ENCODE measurements at regions of chr2 and their contacts with region 1.

Region 1: GRCh38 chr2:127570282-127571250 is 35.1 kb downstream of the MYO7B start:
- DNase-seq: no peak
- ATAC-seq: no peak
- H3K4me3 Mint-ChIP-seq: no peak overlapping the region
- H3K27ac Mint-ChIP-seq: no peak overlapping the region
- H3K4me1 Mint-ChIP-seq: peaks cover 6% of the 10 kb centered on the region
- H3K27me3 Mint-ChIP-seq: peaks cover 2% of the 10 kb centered on the region

Region 2: GRCh38 chr2:126850940-126851339 is 719.6 kb before region 1 on chr2:
- CTCF ChIA-PET with region 1: no interaction called
- POLR2A ChIA-PET with region 1: no interaction called
- intact Hi-C with region 1: no loop called
- DNase-seq: no peak
- ATAC-seq: no peak
- H3K4me3 Mint-ChIP-seq: no peak overlapping the region
- H3K27ac Mint-ChIP-seq: no peak overlapping the region
- H3K4me1 Mint-ChIP-seq: no peaks in the 10 kb centered on the region
- H3K27me3 Mint-ChIP-seq: peaks cover 2% of the 10 kb centered on the region

Region 3: DNA sequence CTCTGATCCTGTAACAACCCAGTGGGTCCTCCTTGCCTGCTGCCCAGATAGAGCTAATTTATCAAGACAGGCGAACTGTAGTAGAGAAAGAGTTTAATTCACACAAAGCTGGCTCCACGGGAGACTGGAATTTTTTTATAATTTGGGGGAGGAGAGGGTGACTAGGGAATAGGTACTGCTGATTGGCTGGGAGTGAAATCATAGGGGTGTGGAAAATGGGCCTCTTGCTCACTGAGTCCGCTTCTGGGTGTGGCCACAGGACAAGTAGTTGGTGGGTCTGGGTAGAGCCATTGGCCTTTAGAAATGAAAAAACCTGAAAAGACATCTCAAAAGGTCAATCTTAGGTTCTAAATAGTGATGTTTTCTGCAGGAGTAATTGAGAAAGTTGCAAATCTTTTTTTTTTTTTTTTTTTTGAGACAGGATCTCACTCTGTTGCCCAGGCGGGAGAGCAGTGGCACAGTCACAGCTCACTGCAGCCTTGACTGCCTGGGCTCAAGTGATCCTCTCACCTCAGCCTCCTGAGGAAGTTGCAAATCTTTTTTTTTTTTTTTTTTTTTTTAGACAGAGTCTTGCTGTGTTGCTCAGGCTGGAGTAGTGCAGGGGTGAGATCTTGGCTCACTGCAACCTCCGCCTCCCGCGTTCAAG is 506.0 kb after region 1 on chr2:
- CTCF ChIA-PET with region 1: no interaction called
- POLR2A ChIA-PET with region 1: no interaction called
- intact Hi-C with region 1: loop called in 1 of 2 experiments (anchors 5 kb)
- DNase-seq: no peak
- ATAC-seq: no peak
- H3K4me3 Mint-ChIP-seq: no peak overlapping the region
- H3K27ac Mint-ChIP-seq: no peak overlapping the region
- H3K4me1 Mint-ChIP-seq: peaks cover 2% of the 10 kb centered on the region
- H3K27me3 Mint-ChIP-seq: peaks cover 2% of the 10 kb centered on the region

Measured in activated CD4-positive, alpha-beta T cell treated with anti-CD3 and anti-CD28 coated beads for 36 hours (primary cell).